ENCODE measurements at regions of chr5 and their contacts with region 1.

Region 1: DNA sequence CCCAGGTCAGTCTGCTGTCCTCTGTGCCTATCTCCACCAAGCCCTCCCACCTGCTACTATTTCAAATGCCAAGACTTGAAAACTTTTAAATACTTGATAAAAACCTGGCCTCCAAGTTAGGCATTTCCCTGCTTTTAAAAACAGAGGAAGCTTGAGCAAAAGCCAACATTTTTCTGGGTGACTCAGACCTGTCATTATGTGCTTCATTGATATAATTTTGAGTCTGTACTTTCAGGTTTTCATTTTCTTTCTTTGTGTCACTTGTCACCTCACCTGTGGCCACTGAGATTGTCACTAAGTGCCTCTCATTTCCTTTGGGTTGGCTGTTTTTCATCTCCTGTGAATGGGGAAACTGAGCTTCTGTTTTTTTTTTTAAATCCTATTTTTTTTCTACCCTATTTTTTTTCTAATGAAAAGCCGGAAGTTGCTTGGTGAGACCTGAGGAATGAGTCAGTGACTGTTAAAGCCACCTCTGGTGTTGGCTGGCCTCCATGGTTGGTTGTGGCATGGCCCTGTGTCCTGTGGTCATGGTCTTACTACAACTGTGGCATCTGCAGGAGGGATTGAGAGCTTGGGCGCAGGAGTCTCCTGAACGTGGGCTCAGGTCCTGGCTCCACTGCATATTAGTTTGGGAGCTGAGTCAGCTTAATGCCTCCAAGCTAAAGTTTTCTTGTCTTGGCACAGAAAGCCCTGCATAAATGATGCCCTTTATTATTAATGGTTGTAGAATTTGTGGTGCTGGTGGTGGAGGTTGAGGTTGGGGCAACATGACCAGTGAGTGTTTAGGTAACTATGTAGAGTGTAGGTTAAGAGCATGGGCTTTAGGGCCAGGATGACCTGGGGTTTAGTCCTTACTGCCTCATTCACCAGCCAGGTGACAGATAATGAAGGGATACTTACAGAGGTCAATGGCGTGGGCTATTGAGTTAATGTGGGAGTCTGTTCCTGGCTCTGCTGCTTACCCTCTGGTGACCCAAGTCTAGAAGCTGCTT is 56.9 kb downstream of the ARHGAP26 start:
- DNase-seq: no peak
- H3K4me3 Mint-ChIP-seq: peak overlapping the region; percentile 25
- H3K27ac Mint-ChIP-seq: peak overlapping the region; percentile 57
- H3K4me1 Mint-ChIP-seq: peaks cover 70% of the 10 kb centered on the region
- H3K27me3 Mint-ChIP-seq: no peaks in the 10 kb centered on the region

Region 2: GRCh38 chr5:142800776-142801494 is 26.1 kb before region 1 on chr5:
- intact Hi-C with region 1: loop called (anchors 1 kb)
- DNase-seq: peak; percentile 53
- H3K4me3 Mint-ChIP-seq: peak overlapping the region; percentile 73
- H3K27ac Mint-ChIP-seq: peak overlapping the region; percentile 93
- H3K4me1 Mint-ChIP-seq: peaks cover 67% of the 10 kb centered on the region
- H3K27me3 Mint-ChIP-seq: no peaks in the 10 kb centered on the region

Region 3: DNA sequence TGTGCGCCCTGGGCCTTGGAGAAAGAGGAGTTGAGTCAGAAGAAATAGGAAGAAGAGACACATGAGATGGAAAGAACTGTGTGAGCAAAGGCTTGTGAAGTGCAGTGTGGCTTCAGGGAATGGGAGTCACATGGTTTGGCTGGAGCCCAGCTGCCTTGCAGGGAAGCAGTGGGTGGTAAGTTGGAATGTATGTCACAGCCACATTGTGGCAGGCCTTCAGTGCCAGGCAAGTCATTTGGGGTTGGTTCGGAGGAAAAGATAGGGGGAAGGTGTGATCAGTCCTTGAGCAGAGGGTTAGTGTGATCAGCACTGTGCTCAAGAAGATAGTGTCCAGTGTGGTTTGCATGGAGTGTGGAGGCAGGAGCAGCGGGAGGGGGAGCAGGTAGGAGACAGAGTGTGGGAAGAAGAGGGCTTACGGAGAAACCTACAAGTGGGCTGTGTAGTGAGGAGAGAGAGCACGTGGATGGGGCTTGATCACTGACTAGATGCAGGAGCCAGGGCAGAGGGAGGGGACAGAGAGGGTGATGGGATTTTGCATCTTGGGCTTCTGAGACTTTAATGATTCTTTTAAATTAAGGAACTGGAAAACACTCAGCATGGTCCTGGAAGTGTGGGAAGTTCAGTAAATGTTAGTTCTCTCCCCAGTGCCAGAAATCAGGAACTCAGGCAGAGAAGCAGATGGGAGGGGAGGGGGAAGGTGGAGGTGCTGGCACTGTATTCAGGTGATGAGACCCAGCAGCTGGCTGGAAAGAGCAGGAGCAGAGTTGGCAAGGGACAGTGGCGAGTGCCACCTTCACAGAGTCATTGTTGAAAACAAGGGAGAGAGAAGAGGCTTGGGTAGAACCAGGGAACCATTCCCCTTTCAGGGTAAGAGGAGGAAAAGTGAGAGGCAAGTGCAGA is 10.3 kb before region 1 on chr5:
- intact Hi-C with region 1: loop called (anchors 1 kb)
- DNase-seq: no peak
- H3K4me3 Mint-ChIP-seq: no peak overlapping the region
- H3K27ac Mint-ChIP-seq: peak overlapping the region; percentile 26
- H3K4me1 Mint-ChIP-seq: peaks cover 58% of the 10 kb centered on the region
- H3K27me3 Mint-ChIP-seq: no peaks in the 10 kb centered on the region

Region 4: DNA sequence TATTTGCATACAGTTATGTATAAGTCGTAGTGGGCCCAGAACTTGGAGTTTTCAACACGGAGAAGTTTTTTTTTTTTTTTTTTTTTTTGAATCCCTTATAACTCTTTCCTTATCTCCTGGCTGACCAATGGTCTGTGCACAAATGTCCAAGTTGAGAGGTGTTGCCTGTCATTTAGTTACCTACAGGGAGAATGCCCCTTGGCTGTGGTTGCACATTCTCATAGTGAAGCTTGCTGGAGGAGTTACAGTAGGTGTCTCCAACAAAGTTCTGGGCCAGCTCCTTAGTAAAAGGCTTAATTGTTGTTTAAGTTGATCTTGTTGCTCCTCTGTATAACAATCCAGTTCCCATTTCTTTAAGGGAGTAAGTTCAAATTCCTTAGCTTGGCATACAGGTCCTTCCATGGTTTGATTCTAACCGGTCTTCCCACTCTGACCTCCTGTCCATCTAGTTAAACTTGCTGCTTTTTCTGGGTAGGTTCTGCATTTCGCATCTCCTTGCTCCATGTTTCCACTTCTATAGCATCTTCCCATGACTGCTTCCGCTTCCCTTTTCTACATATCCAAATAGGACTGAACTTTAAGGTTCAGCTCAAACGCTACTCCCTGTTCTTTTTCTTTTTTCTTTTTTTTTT is 38.5 kb after region 1 on chr5:
- intact Hi-C with region 1: loop called (anchors 1 kb)
- DNase-seq: no peak
- H3K4me3 Mint-ChIP-seq: no peak overlapping the region
- H3K27ac Mint-ChIP-seq: no peak overlapping the region
- H3K4me1 Mint-ChIP-seq: peaks cover 41% of the 10 kb centered on the region
- H3K27me3 Mint-ChIP-seq: peaks cover 3% of the 10 kb centered on the region

Region 5: DNA sequence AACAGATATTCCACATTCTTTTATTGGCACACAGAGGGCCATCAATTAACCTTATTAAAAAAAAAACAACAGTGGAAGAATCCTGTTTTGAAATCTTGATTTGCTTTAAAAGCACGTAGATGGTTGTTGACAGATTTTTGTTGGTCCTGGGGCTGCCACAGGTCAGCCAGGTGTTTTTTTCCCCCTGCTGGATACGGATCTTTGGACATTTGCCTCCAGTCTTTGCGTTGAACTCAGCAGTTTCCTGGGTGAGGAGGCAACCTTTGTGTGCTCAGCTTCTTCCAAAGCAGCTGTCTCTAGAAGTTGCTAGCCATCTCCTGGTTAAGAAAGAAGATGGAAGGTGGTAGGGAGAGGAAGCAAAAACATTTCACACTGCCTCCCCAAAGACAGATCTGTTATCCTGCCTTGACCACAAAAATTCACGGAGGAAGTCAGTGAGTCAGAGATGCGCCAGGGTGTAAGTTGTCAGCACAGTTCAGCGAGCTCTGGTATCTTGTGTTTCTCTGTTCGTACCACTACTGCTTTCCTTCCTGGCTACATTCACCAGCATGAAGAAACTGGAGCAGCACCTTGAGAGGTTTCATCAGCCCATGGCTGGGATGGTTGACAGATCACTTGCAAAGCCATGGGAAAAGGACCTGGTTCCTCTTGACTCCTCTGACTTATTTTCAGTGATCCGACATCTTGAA is 150.5 kb after region 1 on chr5:
- intact Hi-C with region 1: loop called (anchors 1 kb)
- DNase-seq: peak; percentile 55
- H3K4me3 Mint-ChIP-seq: peak overlapping the region; percentile 76
- H3K27ac Mint-ChIP-seq: peak overlapping the region; percentile 92
- H3K4me1 Mint-ChIP-seq: peaks cover 93% of the 10 kb centered on the region
- H3K27me3 Mint-ChIP-seq: no peaks in the 10 kb centered on the region